HCT116 (cell line): ENCODE measurements at regions of chr22 and their contacts with region 1.

Region 1: GRCh38 chr22:45831394-45831793 is 145.6 kb downstream of the WNT7B start:
- DNase-seq: peak; percentile 6
- ATAC-seq: no peak
- H3K4me3 ChIP-seq: no peak overlapping the region
- H3K27ac ChIP-seq: no peak overlapping the region
- H3K4me1 ChIP-seq: peaks cover 0 to 5% of the 10 kb centered on the region in 2 experiments; a peak in 1 of 4 replicates
- H3K27me3 ChIP-seq: no peaks in the 10 kb centered on the region
- CTCF ChIP-seq: peak; percentile 49 to 55 (median 50); a peak in 4 of 6 replicates
- POLR2A ChIP-seq: no peak
- RAD21 ChIP-seq: peak; percentile 69

Region 2: DNA sequence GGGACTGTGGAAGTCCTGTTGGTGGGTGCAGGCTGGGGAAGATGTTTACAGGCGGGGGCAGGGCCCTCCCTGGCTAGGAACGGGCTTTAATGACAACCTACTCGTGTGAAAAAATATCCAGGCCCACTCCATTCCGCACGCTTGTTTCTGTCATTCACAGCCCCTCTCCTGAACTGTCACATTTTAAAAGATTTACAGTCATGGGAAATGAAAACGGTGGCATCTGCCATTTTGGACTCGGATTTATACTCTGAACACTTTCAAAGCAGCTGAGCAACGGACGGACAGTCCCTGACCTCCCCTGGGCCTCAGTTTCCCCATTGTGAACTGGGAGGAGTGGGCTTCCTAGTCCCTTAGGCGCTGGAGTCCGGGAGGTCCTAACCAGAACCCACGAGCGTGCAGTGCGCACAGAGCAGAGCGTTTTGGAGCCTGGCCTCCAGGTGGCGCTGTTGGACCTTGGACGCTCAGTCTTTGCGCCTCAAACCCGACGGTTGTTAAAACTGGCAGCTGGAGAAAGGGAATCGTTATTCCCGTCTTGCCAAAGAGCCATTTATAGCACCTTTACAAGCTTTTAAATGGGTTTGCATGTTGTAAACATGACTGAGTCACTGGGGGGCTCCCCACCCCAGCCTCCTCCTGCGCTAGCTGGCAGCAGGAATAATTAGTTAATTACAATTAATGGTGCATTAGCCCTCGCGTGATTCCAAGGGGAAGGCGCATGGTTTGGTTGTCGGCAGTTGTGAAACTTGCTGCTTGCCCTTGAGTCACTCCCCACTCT is 253.5 kb before region 1 on chr22:
- CTCF ChIA-PET with region 1: no interaction called
- POLR2A ChIA-PET with region 1: no interaction called
- RAD21 ChIA-PET with region 1: no interaction called
- intact Hi-C with region 1: loop called (anchors 1 kb)
- DNase-seq: peak; percentile 68
- ATAC-seq: peak; percentile 94
- H3K4me3 ChIP-seq: no peak overlapping the region
- H3K27ac ChIP-seq: no peak overlapping the region
- H3K4me1 ChIP-seq: peaks cover 0 to 10% of the 10 kb centered on the region in 2 experiments; a peak in 1 of 4 replicates
- H3K27me3 ChIP-seq: no peaks in the 10 kb centered on the region
- CTCF ChIP-seq: peak; percentile 91 to 98 (median 93)
- POLR2A ChIP-seq: no peak
- RAD21 ChIP-seq: peak; percentile 99

Region 3: DNA sequence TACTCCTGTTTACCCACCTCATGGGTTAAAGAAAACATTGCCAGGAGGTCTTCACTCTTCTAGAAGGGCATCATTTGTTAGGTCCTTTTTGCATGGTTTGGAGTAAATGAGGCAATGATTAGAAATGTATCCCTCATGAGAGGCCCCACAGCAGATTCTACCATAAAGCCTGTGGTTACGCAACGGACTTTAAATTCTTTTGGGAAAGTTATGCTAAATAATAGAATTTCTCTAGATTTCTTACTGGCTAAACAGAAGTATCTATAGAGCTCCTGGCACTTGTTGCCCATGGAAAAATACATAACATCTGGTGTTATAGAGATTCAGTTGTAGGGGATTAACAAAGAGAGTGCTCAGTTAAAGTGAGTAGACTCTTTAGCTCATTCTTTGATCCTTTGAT is 174.8 kb before region 1 on chr22:
- CTCF ChIA-PET with region 1: no interaction called
- POLR2A ChIA-PET with region 1: no interaction called
- RAD21 ChIA-PET with region 1: no interaction called
- intact Hi-C with region 1: loop called (anchors 10 kb)
- DNase-seq: no peak
- ATAC-seq: no peak
- H3K4me3 ChIP-seq: no peak overlapping the region
- H3K27ac ChIP-seq: no peak overlapping the region
- H3K4me1 ChIP-seq: no peaks in the 10 kb centered on the region
- H3K27me3 ChIP-seq: no peaks in the 10 kb centered on the region
- CTCF ChIP-seq: no peak
- POLR2A ChIP-seq: no peak
- RAD21 ChIP-seq: no peak